ENCODE measurements at regions of chr2 and their contacts with region 1.

Region 1: GRCh38 chr2:196160101-196160500 is 11.3 kb downstream of the STK17B start:
- DNase-seq: peak in 8 of 9 donors; percentile 61 to 92 (median 88)
- ATAC-seq: peak; percentile 84
- H3K4me3 ChIP-seq: peak overlapping the region; percentile 33
- H3K4me3 Mint-ChIP-seq: peak overlapping the region; percentile 61 to 98 (median 87)
- H3K27ac ChIP-seq: peak overlapping the region; percentile 94
- H3K27ac Mint-ChIP-seq: peak overlapping the region; percentile 84 to 98 (median 94)
- H3K4me1 ChIP-seq: peaks cover 53 to 65% of the 10 kb centered on the region in 2 donors
- H3K4me1 Mint-ChIP-seq: peaks cover 45 to 85% (median 69%) of the 10 kb centered on the region in 7 donors
- H3K27me3 ChIP-seq: no peaks in the 10 kb centered on the region
- H3K27me3 Mint-ChIP-seq: no peaks in the 10 kb centered on the region

Region 2: GRCh38 chr2:195559431-195559914 is 600.6 kb before region 1 on chr2:
- CTCF ChIA-PET with region 1: no interaction called
- POLR2A ChIA-PET with region 1: interaction called, 3 read pairs
- intact Hi-C with region 1: loop called in 1 of 2 experiments (anchors 5 kb)
- DNase-seq: peak; percentile 14 to 93 (median 90)
- ATAC-seq: peak; percentile 94
- H3K4me3 ChIP-seq: peak overlapping the region; percentile 33
- H3K4me3 Mint-ChIP-seq: peak overlapping the region; percentile 61 to 89 (median 76)
- H3K27ac ChIP-seq: peak overlapping the region; percentile 71
- H3K27ac Mint-ChIP-seq: peak overlapping the region; percentile 84 to 99 (median 94)
- H3K4me1 ChIP-seq: peaks cover 58 to 74% of the 10 kb centered on the region in 2 donors
- H3K4me1 Mint-ChIP-seq: peaks cover 43 to 78% (median 69%) of the 10 kb centered on the region in 7 donors
- H3K27me3 ChIP-seq: no peaks in the 10 kb centered on the region
- H3K27me3 Mint-ChIP-seq: no peaks in the 10 kb centered on the region

Region 3: GRCh38 chr2:195664528-195664927 is 495.6 kb before region 1 on chr2:
- CTCF ChIA-PET with region 1: no interaction called
- POLR2A ChIA-PET with region 1: no interaction called
- intact Hi-C with region 1: no loop called
- DNase-seq: peak in 2 of 9 donors; percentile 13 to 20
- ATAC-seq: no peak
- H3K4me3 ChIP-seq: no peak overlapping the region
- H3K4me3 Mint-ChIP-seq: peak overlapping the region in 4 of 10 donors; percentile 45 to 54 (median 49)
- H3K27ac ChIP-seq: peak overlapping the region; percentile 42
- H3K27ac Mint-ChIP-seq: peak overlapping the region in 8 of 9 donors; percentile 71 to 93 (median 85)
- H3K4me1 ChIP-seq: peaks cover 20 to 46% of the 10 kb centered on the region in 2 donors
- H3K4me1 Mint-ChIP-seq: peaks cover 30 to 95% (median 78%) of the 10 kb centered on the region in 7 donors
- H3K27me3 ChIP-seq: no peaks in the 10 kb centered on the region
- H3K27me3 Mint-ChIP-seq: no peaks in the 10 kb centered on the region

Region 4: DNA sequence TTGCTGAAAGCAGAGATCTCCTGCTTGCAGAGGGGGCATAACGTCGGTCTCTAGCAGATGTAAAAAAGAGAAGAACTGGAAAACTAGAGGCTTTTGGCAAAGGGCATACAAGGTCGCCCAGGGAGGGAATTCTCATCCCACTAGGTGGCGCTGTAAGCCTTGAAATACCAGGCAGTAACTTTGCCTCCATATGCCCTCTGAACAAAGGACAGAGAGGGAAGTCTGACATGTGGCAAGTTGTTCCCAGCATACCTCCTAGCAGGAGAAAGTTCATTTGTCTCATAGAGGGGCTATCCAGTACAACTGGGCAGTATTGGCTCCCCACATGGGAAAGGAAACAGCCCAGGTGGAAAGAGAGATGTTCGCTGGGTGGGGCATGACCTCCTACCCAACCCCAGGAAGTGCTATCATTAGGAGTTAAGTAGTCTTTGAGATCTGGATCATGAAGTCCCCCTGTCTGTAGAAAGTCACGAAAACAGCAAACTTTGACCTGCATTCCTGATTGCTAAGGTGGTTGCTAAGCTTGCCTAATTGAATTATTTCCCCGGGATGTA is 28.6 kb before region 1 on chr2:
- CTCF ChIA-PET with region 1: interaction called, 3 read pairs
- POLR2A ChIA-PET with region 1: interaction called, 4 read pairs
- intact Hi-C with region 1: loop called (anchors 1 to 5 kb)
- DNase-seq: peak in 4 of 9 donors; percentile 30 to 57 (median 50)
- ATAC-seq: peak; percentile 58
- H3K4me3 ChIP-seq: no peak overlapping the region
- H3K4me3 Mint-ChIP-seq: peak overlapping the region in 3 of 10 donors; percentile 1 to 36 (median 32)
- H3K27ac ChIP-seq: no peak overlapping the region
- H3K27ac Mint-ChIP-seq: peak overlapping the region in 8 of 9 donors; percentile 63 to 91 (median 79)
- H3K4me1 ChIP-seq: no peaks in the 10 kb centered on the region
- H3K4me1 Mint-ChIP-seq: peaks cover 0 to 27% (median 16%) of the 10 kb centered on the region in 7 donors
- H3K27me3 ChIP-seq: no peaks in the 10 kb centered on the region
- H3K27me3 Mint-ChIP-seq: no peaks in the 10 kb centered on the region

Region 5: GRCh38 chr2:196149948-196150347 is 10.2 kb before region 1 on chr2:
- CTCF ChIA-PET with region 1: interaction called, 5 read pairs
- POLR2A ChIA-PET with region 1: interaction called, 87 read pairs
- intact Hi-C with region 1: loop called (anchors 1 kb)
- DNase-seq: peak in 2 of 9 donors; percentile 19 to 49
- ATAC-seq: peak; percentile 48
- H3K4me3 ChIP-seq: no peak overlapping the region
- H3K4me3 Mint-ChIP-seq: peak overlapping the region; percentile 1 to 87 (median 72)
- H3K27ac ChIP-seq: peak overlapping the region; percentile 71
- H3K27ac Mint-ChIP-seq: peak overlapping the region; percentile 81 to 95 (median 90)
- H3K4me1 ChIP-seq: peaks cover 63 to 86% of the 10 kb centered on the region in 2 donors
- H3K4me1 Mint-ChIP-seq: peaks cover 49 to 99% (median 94%) of the 10 kb centered on the region in 7 donors
- H3K27me3 ChIP-seq: no peaks in the 10 kb centered on the region
- H3K27me3 Mint-ChIP-seq: no peaks in the 10 kb centered on the region

Region 6: DNA sequence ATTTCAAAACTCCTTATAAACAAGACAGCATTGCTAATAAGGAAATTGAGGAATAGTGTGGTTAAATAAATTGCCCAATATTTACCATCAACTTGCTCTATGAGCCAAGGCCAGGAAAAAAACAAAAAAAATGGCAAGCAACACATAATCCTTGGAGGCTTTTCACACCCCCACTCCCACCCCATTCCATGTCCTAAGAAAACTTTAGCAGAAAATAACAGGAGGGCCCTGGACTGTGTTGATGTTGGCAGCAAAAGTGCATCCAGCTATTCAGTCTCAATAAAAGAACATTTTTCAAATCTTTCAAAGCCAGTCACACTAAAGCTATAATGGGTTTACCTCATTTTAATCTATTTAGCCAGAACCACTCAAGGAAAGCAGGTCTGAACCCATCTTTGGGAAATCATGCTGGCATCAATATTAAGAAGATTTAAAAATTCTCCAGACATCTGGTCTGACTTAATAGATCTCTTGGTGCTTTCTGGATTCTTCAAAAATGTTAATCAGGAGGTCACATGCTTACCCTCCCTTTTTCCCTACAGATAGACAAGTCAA is 45.9 kb after region 1 on chr2:
- CTCF ChIA-PET with region 1: no interaction called
- POLR2A ChIA-PET with region 1: interaction called, 19 read pairs
- intact Hi-C with region 1: loop called (anchors 1 kb)
- DNase-seq: no peak
- ATAC-seq: no peak
- H3K4me3 ChIP-seq: no peak overlapping the region
- H3K4me3 Mint-ChIP-seq: no peak overlapping the region
- H3K27ac ChIP-seq: no peak overlapping the region
- H3K27ac Mint-ChIP-seq: peak overlapping the region in 7 of 9 donors; percentile 28 to 85 (median 66)
- H3K4me1 ChIP-seq: peaks cover 17 to 31% of the 10 kb centered on the region in 2 donors
- H3K4me1 Mint-ChIP-seq: peaks cover 29 to 75% (median 51%) of the 10 kb centered on the region in 7 donors
- H3K27me3 ChIP-seq: no peaks in the 10 kb centered on the region
- H3K27me3 Mint-ChIP-seq: no peaks in the 10 kb centered on the region

Region 7: DNA sequence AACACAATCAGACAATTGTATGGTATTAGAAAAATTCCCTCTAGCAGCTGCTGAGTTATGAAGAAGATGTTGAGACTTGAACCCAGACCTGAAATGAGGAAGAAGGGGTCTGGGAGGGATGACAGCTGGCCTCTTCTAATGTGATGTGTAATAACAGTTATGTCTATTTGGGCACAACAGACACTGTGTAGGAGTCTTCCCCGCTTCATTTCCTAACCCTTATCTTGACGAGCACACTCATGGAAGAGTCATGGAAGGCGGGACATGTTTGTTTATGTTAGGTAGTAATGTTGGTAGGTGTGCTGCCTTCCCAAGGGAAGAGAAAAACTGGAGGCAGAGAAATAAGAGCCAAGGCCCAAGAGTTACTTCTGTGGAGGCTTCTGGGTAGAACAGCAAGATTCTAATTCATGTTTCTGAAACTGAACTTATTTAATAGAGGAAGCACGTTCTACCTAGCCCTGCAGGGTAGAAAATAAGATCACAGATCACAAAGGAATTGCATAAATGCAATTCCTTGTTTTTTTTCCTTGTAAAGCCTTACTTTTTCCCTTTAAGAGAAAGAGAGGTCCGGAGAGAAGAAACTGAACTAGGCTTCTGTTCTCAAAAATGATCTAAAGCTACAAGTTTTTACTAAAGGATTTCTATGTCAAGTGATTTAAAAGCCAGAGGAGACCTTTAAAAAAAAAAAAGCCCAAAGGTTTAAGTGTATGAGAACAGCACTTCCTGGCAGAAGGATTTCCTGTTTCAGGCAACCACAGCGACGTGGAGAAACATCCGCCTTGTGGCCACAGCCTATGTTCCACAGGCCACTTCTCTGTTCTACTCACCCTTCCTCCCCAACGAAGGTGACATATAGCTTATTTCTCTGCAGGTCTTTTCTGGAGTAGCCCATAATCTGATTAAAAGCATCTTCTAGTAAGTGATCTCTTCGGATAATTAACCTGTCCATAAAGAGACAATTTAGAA is 79.8 kb after region 1 on chr2:
- CTCF ChIA-PET with region 1: interaction called, 4 read pairs
- POLR2A ChIA-PET with region 1: interaction called, 38 read pairs
- intact Hi-C with region 1: loop called (anchors 1 kb)
- DNase-seq: peak; percentile 33 to 90 (median 83)
- ATAC-seq: peak; percentile 87
- H3K4me3 ChIP-seq: peak overlapping the region; percentile 36
- H3K4me3 Mint-ChIP-seq: peak overlapping the region; percentile 64 to 87 (median 76)
- H3K27ac ChIP-seq: peak overlapping the region; percentile 71
- H3K27ac Mint-ChIP-seq: peak overlapping the region; percentile 90 to 99 (median 97)
- H3K4me1 ChIP-seq: peaks cover 57 to 60% of the 10 kb centered on the region in 2 donors
- H3K4me1 Mint-ChIP-seq: peaks cover 55 to 90% (median 80%) of the 10 kb centered on the region in 7 donors
- H3K27me3 ChIP-seq: no peaks in the 10 kb centered on the region
- H3K27me3 Mint-ChIP-seq: no peaks in the 10 kb centered on the region

Region 8: GRCh38 chr2:196277002-196277401 is 116.9 kb after region 1 on chr2:
- CTCF ChIA-PET with region 1: interaction called, 26 read pairs
- POLR2A ChIA-PET with region 1: interaction called, 28 read pairs
- intact Hi-C with region 1: no loop called
- DNase-seq: peak in 7 of 9 donors; percentile 45 to 74 (median 63)
- ATAC-seq: peak; percentile 79
- H3K4me3 ChIP-seq: no peak overlapping the region
- H3K4me3 Mint-ChIP-seq: peak overlapping the region in 6 of 10 donors; percentile 30 to 83 (median 65)
- H3K27ac ChIP-seq: peak overlapping the region; percentile 63
- H3K27ac Mint-ChIP-seq: peak overlapping the region; percentile 50 to 99 (median 89)
- H3K4me1 ChIP-seq: peaks cover 21 to 42% of the 10 kb centered on the region in 2 donors
- H3K4me1 Mint-ChIP-seq: peaks cover 29 to 60% (median 47%) of the 10 kb centered on the region in 7 donors
- H3K27me3 ChIP-seq: no peaks in the 10 kb centered on the region
- H3K27me3 Mint-ChIP-seq: no peaks in the 10 kb centered on the region

Region 9: DNA sequence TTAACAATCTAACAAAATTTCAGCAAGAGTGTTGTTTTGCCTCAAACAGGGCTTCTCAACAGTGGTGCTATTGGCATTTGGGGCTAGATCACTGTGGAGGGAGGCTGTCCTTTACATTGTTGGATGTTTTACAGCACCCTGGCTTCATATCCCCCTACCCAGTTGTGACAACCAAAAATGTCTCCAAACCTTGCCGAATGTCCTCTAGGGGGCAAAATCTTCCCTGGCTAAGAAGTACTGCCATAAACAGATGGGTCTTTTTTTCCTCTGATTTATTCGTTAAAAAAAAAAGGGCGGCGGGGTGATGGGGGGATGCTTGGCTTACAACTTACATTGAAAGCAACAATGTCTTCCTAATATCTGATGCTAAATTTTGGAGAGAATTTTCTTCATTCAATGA is 271.9 kb after region 1 on chr2:
- CTCF ChIA-PET with region 1: no interaction called
- POLR2A ChIA-PET with region 1: no interaction called
- intact Hi-C with region 1: no loop called
- DNase-seq: no peak
- ATAC-seq: no peak
- H3K4me3 ChIP-seq: no peak overlapping the region
- H3K4me3 Mint-ChIP-seq: no peak overlapping the region
- H3K27ac ChIP-seq: no peak overlapping the region
- H3K27ac Mint-ChIP-seq: no peak overlapping the region
- H3K4me1 ChIP-seq: no peaks in the 10 kb centered on the region
- H3K4me1 Mint-ChIP-seq: peaks cover 0 to 12% (median 5%) of the 10 kb centered on the region in 7 donors
- H3K27me3 ChIP-seq: no peaks in the 10 kb centered on the region
- H3K27me3 Mint-ChIP-seq: peaks cover 5 to 31% (median 15%) of the 10 kb centered on the region in 5 donors